Heart left ventricle (tissue), 16 donors: ENCODE measurements at regions of chr3 and their contacts with region 1.

Region 1: DNA sequence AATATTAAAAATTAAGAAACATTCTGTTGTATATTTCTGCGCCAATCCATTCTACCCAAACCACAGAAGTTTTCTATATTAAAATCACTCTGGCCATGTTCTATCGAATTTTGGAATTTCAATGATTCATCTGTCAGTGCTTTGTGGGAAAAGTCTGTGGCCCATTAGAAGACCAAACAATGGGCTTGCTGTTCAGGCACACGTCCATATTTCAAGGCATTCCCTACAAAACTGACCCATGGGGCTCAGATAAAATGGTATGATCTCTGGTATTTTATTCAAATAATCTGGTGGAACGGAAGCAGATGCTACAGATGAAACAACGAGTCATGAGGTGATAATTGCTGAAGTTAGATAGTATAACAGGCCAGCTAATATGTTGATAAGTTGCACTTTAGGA is 12.4 kb downstream of the NPHP3 start:
- DNase-seq: no peak
- ATAC-seq: no peak
- H3K4me3 ChIP-seq: no peak overlapping the region
- H3K27ac ChIP-seq: no peak overlapping the region
- H3K4me1 ChIP-seq: peaks cover 0 to 6% (median 0%) of the 10 kb centered on the region in 12 donors
- H3K27me3 ChIP-seq: no peaks in the 10 kb centered on the region
- CTCF ChIP-seq: no peak
- POLR2A ChIP-seq: no peak

Region 2: DNA sequence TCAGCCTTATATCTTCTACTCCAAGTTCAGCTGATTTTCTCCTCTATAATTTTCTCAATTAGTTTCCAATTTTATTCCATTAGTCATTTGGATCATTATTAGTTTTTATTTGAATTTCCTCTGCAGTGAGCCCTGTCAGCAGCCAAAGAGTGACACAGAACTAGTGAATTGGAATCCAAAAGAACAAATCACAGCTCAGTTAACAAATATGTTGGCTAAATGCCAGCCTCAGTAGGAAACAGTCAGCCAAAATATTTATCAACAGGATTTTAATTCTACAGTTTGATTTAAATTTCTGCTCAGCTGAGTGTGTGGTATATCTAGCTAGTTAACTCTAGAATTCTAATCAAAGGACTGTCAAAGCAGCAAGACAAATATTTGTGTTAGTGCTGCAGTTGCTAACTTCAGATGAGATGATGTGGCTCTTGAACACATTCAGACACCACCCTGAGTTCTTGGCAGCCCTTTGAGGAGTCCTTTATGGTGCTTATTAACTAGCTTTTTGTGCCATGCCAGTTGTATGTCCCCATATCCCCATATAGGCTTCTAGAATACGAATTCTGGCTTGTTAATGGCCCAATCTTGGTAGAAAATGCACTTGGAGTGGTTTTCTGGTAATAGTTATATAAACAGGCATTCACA is 869.5 kb before region 1 on chr3:
- intact Hi-C with region 1: no loop called
- DNase-seq: no peak
- ATAC-seq: no peak
- H3K4me3 ChIP-seq: no peak overlapping the region
- H3K27ac ChIP-seq: no peak overlapping the region
- H3K4me1 ChIP-seq: peaks cover 0 to 7% (median 0%) of the 10 kb centered on the region in 12 donors
- H3K27me3 ChIP-seq: no peaks in the 10 kb centered on the region
- CTCF ChIP-seq: no peak
- POLR2A ChIP-seq: no peak

Region 3: GRCh38 chr3:132222868-132223538 is 486.8 kb before region 1 on chr3:
- intact Hi-C with region 1: no loop called
- DNase-seq: no peak
- ATAC-seq: no peak
- H3K4me3 ChIP-seq: no peak overlapping the region
- H3K27ac ChIP-seq: no peak overlapping the region
- H3K4me1 ChIP-seq: peaks cover 0 to 6% (median 0%) of the 10 kb centered on the region in 12 donors
- H3K27me3 ChIP-seq: no peaks in the 10 kb centered on the region
- CTCF ChIP-seq: no peak
- POLR2A ChIP-seq: no peak

Region 4: GRCh38 chr3:132522353-132522752 is 187.4 kb before region 1 on chr3:
- intact Hi-C with region 1: loop called in 1 of 10 experiments (anchors 10 kb)
- DNase-seq: no peak
- ATAC-seq: no peak
- H3K4me3 ChIP-seq: no peak overlapping the region
- H3K27ac ChIP-seq: no peak overlapping the region
- H3K4me1 ChIP-seq: no peaks in the 10 kb centered on the region
- H3K27me3 ChIP-seq: no peaks in the 10 kb centered on the region
- CTCF ChIP-seq: no peak
- POLR2A ChIP-seq: no peak

Region 5: DNA sequence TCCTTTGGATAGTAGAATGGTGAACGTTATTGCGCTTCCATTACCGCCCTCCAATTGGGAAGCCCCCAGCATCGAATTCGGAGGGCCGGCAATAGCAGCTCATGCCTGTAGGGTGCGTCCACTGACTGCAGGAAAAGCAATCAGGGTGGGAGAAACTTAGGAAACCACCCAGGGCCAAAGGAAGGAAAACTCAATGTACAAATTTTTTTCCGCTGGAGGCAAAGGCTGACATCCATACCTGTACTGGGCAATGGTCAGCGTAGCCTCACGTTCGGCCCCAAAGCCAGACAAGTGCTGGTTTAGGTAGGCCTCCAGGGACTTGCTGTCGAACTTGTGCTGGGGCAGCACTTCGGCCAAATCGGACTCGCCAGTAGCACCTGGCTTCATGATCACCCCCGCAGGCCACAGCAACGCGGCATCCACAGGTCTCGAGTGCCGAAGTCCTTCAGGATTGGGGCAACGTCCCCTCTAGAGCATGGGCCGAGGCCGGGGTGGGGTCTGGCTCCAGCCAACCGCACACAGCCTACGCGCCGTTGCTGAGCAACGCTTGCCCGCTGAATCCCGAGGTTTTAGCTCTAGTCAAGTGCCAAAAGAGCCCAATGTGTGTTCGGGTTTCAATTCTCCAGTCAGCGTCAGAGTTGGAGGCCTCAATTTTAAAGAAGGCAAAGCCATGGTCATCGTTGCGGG is 50.3 kb before region 1 on chr3 and contains the start of gene ACAD11:
- intact Hi-C with region 1: loop called in 1 of 10 experiments (anchors 10 kb)
- DNase-seq: peak; percentile 73 to 81 (median 78)
- ATAC-seq: peak; percentile 83 to 88 (median 85)
- H3K4me3 ChIP-seq: peak within 1 kb of the TSS; percentile 54 to 96 (median 86)
- H3K27ac ChIP-seq: peak within 1 kb of the TSS; percentile 73 to 96 (median 93)
- H3K4me1 ChIP-seq: peaks cover 0 to 73% (median 51%) of the 10 kb centered on the region in 12 donors
- H3K27me3 ChIP-seq: no peaks in the 10 kb centered on the region
- CTCF ChIP-seq: peak; percentile 41 to 82 (median 63)
- POLR2A ChIP-seq: no peak
- total RNA-seq, gene ACAD11: 18.3 to 38.8 (median 24.5) TPM

Region 6: DNA sequence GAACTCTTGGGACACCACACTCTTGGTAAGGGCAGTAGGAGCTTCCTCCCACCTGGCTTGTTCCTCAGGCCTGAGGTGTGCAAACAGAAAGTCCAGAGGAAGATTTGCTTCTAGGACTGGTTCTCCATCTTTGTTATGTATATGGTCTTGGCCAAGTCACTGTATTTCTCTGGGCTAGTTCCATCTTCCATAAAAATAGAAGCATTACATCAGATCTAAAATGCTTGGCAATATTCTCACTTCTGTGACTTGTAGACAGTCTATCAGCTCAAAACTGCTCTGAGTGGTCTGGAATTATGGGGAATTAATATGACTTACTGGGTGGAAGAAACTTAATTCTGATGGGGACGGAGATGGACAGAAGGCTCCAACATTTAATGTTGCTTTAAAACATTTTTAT is 383.6 kb after region 1 on chr3:
- intact Hi-C with region 1: no loop called
- DNase-seq: no peak
- ATAC-seq: peak in 3 of 4 donors; percentile 67 to 72 (median 69)
- H3K4me3 ChIP-seq: no peak overlapping the region
- H3K27ac ChIP-seq: no peak overlapping the region
- H3K4me1 ChIP-seq: peaks cover 0 to 17% (median 0%) of the 10 kb centered on the region in 12 donors
- H3K27me3 ChIP-seq: no peaks in the 10 kb centered on the region
- CTCF ChIP-seq: no peak
- POLR2A ChIP-seq: no peak